ENCODE measurements at regions of chr19 and their contacts with region 1.

Region 1: DNA sequence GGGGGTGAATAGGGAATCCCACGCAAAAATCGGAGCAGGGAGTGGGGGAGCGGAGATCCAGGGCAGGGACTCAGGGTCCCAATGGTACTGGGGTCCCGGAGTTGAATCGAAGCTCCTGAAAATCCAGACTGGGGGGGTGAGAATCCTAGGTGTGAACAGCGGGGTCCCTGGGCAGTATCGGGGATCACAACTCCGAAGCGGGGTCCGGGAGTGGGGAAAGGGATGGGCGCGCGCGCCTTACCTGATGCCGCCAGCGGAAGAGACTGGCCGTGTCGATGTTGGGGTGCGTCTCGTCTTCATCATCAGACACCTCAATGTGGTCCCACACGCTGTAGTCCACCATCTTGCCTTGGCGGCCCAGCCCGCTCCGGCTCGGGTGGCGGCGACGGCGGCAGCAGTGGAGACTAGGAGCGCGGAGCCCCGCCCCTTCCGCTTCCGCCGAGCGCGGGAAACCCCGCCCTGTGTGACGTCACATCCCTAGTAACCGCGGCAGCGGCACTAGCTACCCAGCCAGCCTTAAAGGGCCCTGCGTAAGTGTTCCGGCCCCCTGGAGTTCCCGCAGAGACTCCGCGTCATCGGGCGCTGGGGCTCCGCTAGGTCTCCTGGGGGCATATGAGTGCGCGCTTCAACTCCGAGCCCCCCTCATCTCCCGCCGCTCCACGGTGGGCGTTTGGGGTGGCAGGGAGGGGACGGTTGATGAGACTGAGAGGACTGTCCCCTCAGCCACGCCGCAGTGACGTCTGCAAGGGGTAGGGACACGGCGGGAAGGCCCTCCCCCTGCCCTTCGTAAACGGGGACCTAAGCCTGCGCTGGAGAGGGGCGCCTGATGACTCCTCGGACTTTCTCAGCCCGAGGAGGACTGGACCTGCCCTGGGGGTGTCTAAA is at the start of gene CDC37:
- DNase-seq: peak; percentile 99
- ATAC-seq: peak; percentile 79
- H3K4me3 Mint-ChIP-seq: peak within 1 kb of the TSS; percentile 94
- H3K27ac Mint-ChIP-seq: peak within 1 kb of the TSS; percentile 87
- H3K4me1 Mint-ChIP-seq: peaks cover 61% of the 10 kb centered on the region
- H3K27me3 Mint-ChIP-seq: no peaks in the 10 kb centered on the region
- total RNA-seq, gene CDC37: 178 to 190 TPM

Region 2: DNA sequence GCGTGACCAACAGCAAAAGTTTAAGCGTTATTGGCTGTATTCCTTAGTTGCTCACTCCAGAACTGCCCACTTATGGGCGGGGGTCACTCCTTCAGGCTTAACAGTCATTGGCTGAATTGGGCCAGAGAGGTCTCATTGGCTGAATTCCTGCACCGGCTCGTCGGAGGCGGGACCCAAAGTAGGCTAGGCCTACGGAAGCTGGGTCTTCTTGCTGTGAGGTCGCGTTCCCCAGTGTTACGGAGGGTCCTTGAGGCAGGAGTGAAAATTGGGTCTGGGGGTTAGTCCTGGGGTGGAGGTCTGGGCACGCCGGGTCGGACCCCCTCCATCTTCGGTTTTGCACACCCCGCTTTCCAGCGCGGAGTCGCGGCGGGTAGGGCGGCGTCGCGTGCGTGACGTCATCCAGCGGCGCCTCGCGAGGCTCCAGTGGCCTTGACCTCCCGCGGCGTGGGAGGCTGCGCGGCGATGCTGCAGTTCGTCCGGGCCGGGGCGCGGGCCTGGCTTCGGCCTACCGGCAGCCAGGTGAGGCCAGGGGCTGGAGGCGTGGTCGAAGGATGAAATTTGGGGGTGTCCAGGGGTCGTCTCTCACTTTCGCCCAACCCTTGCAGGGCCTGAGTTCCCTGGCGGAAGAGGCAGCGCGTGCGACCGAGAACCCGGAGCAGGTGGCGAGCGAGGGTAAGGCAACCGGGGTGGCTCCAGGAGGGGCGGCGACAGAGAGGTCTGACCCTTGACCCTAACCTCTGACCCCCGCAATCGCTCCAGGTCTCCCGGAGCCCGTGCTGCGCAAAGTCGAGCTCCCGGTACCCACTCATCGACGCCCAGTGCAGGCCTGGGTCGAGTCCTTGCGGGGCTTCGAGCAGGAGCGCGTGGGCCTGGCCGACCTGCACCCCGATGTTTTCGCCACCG is 151.3 kb before region 1 on chr19 and contains the start of gene MRPL4:
- CTCF ChIA-PET with region 1: no interaction called
- POLR2A ChIA-PET with region 1: no interaction called
- intact Hi-C with region 1: loop called in 1 of 2 experiments (anchors 1 kb)
- DNase-seq: peak; percentile 97
- ATAC-seq: peak; percentile 99
- H3K4me3 Mint-ChIP-seq: peak within 1 kb of the TSS; percentile 97
- H3K27ac Mint-ChIP-seq: peak within 1 kb of the TSS; percentile 97
- H3K4me1 Mint-ChIP-seq: peaks cover 18% of the 10 kb centered on the region
- H3K27me3 Mint-ChIP-seq: no peaks in the 10 kb centered on the region
- total RNA-seq, gene MRPL4: 130 to 140 TPM

Region 3: DNA sequence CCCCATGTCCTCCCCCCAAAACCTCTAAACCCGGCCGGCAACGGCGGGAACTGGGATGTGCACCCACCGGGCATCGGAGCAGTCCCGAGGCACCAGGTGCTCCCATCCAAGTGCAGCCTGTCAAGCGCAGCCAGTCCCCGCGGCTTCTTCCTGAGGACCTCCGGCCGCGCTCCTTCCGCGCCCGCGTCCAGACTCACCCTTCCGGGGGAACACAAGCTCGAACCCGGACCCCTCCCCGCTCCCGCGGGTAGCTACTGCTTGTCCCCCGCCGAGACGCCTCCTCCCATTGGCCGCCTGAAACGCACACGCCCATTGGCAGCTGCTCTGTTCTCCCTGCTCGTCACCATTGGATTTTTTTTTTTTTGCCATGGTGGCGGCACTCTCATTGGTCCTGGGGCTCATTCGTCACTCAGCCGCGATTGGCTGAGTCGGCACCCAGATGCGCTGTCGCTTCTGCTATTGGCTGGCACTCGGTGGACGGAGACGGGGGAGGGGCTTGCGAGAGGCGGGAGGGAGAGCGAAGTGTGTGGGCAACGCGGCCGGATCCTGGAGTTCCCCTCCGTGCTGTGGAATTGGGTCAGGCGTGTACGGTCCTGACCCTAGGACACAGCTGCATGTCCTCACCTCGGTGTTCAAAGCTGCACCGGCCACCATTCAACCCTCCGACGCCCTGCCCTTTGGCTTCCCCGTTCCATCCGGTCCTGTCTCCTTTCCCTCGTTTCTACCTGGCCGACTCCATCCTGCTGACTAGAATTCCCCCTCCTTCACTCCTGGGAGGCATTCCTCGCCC is 22.9 kb before region 1 on chr19 and contains the start of gene TYK2:
- CTCF ChIA-PET with region 1: interaction called, 3 read pairs
- POLR2A ChIA-PET with region 1: no interaction called
- intact Hi-C with region 1: loop called (anchors 1 kb)
- DNase-seq: peak; percentile 97
- ATAC-seq: peak; percentile 99
- H3K4me3 Mint-ChIP-seq: peak within 1 kb of the TSS; percentile 86
- H3K27ac Mint-ChIP-seq: peak within 1 kb of the TSS; percentile 96
- H3K4me1 Mint-ChIP-seq: peaks cover 22% of the 10 kb centered on the region
- H3K27me3 Mint-ChIP-seq: no peaks in the 10 kb centered on the region
- total RNA-seq, gene TYK2: 151 to 197 TPM

Region 4: GRCh38 chr19:10424011-10424637 is 20.7 kb after region 1 on chr19:
- CTCF ChIA-PET with region 1: interaction called, 135 read pairs
- POLR2A ChIA-PET with region 1: interaction called, 3 read pairs
- intact Hi-C with region 1: loop called (anchors 1 to 2 kb)
- DNase-seq: peak; percentile 85
- ATAC-seq: peak; percentile 31
- H3K4me3 Mint-ChIP-seq: peak overlapping the region; percentile 47
- H3K27ac Mint-ChIP-seq: no peak overlapping the region
- H3K4me1 Mint-ChIP-seq: peaks cover 72% of the 10 kb centered on the region
- H3K27me3 Mint-ChIP-seq: peaks cover 53% of the 10 kb centered on the region

Region 5: DNA sequence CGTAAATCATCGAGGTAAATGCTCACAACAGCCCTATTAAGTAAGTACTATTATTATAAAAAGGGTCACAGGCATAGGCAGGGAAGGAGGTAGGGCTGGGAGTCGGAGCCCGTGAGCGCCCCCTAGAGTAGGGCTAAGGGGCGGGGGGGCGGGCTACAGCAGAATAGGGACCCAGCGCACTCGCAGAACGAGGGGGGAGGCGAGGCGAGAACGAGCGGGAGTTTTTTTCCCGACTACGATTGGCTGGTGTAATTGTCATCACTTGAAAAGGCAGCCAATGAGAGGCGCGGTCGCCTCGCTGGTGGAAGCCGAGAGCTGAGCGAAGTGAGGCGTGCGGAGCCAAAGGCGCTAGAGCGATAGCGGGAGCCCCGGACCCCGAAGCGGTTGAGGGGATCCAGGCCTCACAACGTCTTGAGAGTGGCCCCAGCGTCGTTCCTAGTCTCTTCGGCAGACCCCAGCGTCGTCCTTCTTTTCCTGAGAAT is 75.6 kb after region 1 on chr19:
- CTCF ChIA-PET with region 1: interaction called, 3 read pairs
- POLR2A ChIA-PET with region 1: no interaction called
- intact Hi-C with region 1: loop called in 1 of 2 experiments (anchors 1 kb)
- DNase-seq: peak; percentile 94
- ATAC-seq: peak; percentile 99
- H3K4me3 Mint-ChIP-seq: peak overlapping the region; percentile 38
- H3K27ac Mint-ChIP-seq: peak overlapping the region; percentile 47
- H3K4me1 Mint-ChIP-seq: peaks cover 13% of the 10 kb centered on the region
- H3K27me3 Mint-ChIP-seq: no peaks in the 10 kb centered on the region

Region 6: GRCh38 chr19:10602330-10603083 is 199.1 kb after region 1 on chr19:
- CTCF ChIA-PET with region 1: no interaction called
- POLR2A ChIA-PET with region 1: interaction called, 4 read pairs
- intact Hi-C with region 1: loop called in 1 of 2 experiments (anchors 1 kb)
- DNase-seq: peak; percentile 95
- ATAC-seq: peak; percentile 84
- H3K4me3 Mint-ChIP-seq: peak overlapping the region; percentile 95
- H3K27ac Mint-ChIP-seq: peak overlapping the region; percentile 99
- H3K4me1 Mint-ChIP-seq: peaks cover 24% of the 10 kb centered on the region
- H3K27me3 Mint-ChIP-seq: no peaks in the 10 kb centered on the region